ENCODE measurements at regions of chr3 and their contacts with region 1.

Region 1: DNA sequence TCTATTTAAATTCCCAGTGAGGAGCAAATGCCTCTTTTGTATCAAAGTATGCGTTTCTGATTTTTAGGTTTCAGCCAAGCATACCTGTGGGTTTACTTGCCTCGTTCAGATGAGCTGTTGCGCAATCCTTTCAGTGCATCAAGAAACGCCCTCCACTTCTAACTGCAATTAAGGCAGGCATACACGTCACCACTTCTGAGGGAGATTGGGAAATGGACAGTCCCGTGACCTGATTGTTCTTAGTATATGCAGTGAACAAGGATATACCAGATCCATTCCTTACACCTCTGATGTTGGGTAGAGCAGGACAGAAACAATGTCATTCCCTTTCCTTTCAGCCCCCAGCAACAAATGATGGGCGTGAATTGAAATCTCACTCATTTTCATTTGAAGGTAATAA is 219.0 kb downstream of the ITPR1 start:
- DNase-seq: peak in 2 of 14 experiments; percentile 34 to 42
- ATAC-seq: no peak
- H3K4me3 ChIP-seq: no peak overlapping the region
- H3K4me3 Mint-ChIP-seq: no peak overlapping the region
- H3K27ac ChIP-seq: no peak overlapping the region
- H3K27ac Mint-ChIP-seq: no peak overlapping the region
- H3K4me1 ChIP-seq: no peaks in the 10 kb centered on the region
- H3K4me1 Mint-ChIP-seq: no peaks in the 10 kb centered on the region
- H3K27me3 ChIP-seq: no peaks in the 10 kb centered on the region
- H3K27me3 Mint-ChIP-seq: no peaks in the 10 kb centered on the region
- CTCF ChIP-seq: no peak

Region 2: DNA sequence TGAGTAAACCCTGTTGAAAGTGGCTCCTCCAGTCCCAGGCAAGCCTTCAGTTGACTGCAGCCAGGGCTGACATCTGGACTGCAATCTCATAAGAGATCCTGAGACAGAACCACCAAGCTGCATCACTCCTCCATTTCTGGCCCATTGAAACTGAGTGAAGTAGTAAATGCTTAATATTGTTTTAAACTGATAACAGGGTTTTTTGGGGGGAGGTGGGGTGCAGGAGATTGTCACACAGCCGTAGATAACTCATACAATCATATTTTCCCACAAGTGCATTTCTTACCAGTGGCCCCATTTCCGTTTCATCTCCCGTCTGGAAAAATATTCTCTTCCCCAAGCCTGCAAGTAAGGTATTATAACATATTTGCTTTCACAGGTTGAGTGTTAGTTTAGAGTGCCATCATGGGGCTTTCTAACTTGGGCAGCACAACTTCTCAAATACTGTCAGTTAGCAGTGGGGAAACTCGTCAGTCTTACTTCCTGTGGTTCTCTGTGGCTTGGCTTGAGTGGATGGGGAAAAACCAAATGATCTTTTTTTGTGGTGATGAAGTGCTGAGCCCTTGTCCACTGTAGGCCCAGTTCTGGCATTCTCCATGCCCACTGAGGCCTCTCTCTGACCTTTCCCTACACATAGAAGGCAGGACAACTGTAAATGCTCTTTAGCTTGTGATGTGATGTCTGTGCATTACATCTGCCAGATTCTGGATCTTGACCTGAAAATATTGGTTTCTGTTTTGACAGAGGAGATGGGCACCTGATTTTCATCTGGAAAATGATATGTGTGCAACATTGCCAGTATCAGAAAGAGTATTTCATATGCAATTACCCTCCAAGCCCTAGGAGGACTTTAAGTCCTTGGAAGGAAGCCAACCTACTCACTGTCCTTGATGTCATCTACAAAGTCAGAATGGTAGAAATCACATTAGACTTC is 177.0 kb after region 1 on chr3:
- CTCF ChIA-PET with region 1: no interaction called
- POLR2A ChIA-PET with region 1: no interaction called
- intact Hi-C with region 1: loop called in 1 of 2 experiments (anchors 5 kb)
- DNase-seq: peak in 5 of 14 experiments; percentile 13 to 73 (median 68)
- ATAC-seq: peak; percentile 66
- H3K4me3 ChIP-seq: no peak overlapping the region
- H3K4me3 Mint-ChIP-seq: no peak overlapping the region
- H3K27ac ChIP-seq: no peak overlapping the region
- H3K27ac Mint-ChIP-seq: peak overlapping the region; percentile 39
- H3K4me1 ChIP-seq: peaks cover 19% of the 10 kb centered on the region
- H3K4me1 Mint-ChIP-seq: peaks cover 16% of the 10 kb centered on the region
- H3K27me3 ChIP-seq: no peaks in the 10 kb centered on the region
- H3K27me3 Mint-ChIP-seq: no peaks in the 10 kb centered on the region
- CTCF ChIP-seq: no peak

Region 3: GRCh38 chr3:4943553-4943952 is 231.4 kb after region 1 on chr3:
- CTCF ChIA-PET with region 1: no interaction called
- POLR2A ChIA-PET with region 1: no interaction called
- intact Hi-C with region 1: no loop called
- DNase-seq: peak in 2 of 14 experiments; percentile 11 to 24
- ATAC-seq: no peak
- H3K4me3 ChIP-seq: no peak overlapping the region
- H3K4me3 Mint-ChIP-seq: no peak overlapping the region
- H3K27ac ChIP-seq: no peak overlapping the region
- H3K27ac Mint-ChIP-seq: no peak overlapping the region
- H3K4me1 ChIP-seq: no peaks in the 10 kb centered on the region
- H3K4me1 Mint-ChIP-seq: no peaks in the 10 kb centered on the region
- H3K27me3 ChIP-seq: no peaks in the 10 kb centered on the region
- H3K27me3 Mint-ChIP-seq: no peaks in the 10 kb centered on the region
- CTCF ChIP-seq: peak; percentile 29

Region 4: DNA sequence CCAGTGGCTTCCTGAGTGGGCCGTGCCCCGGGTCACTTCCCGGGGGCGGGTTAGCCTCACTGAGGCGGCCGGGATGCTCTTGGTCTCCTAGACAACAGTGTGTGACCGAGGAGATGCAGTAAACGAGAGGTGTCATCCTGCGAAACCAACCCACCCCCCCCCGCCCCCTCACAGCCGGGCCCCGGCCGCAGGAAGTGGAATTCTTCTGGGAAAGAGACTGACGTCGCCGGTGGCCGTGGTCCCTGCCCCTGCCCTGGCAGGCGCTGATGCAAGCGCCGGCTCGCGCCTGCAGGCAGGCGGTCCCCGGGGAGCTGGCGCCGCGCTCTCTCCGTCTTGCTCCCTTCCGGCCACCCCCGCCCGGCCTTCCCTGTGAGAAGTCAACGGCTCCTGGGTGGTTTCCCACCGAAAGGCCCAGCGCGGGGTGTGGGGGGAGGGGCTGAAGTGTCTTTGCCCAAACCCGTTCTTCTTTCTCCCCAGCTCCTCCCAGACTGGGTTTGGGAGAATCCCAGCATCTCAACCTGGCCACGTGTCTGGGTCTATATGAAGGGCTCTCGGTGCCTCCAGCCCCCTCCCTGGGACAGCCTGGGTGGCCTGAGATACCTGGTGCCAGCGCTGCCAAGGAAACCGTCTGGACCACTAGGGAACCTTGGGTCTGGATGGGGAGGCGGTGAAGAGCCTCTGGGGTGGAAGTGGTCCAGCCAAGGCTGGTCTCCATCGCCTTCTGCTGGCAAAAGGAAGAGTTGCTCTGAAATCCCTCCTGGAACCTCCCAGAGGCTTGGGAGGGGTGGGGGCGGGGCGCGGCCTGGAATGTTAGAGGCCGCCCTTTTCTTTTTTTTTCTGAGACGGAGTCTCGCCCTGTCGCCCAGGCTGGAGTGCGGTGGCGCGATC is 314.4 kb after region 1 on chr3:
- CTCF ChIA-PET with region 1: interaction called, 15 read pairs
- POLR2A ChIA-PET with region 1: interaction called, 3 read pairs
- intact Hi-C with region 1: loop called (anchors 1 kb)
- DNase-seq: peak; percentile 33 to 87 (median 48)
- ATAC-seq: peak; percentile 75
- H3K4me3 ChIP-seq: peak overlapping the region; percentile 61
- H3K4me3 Mint-ChIP-seq: peak overlapping the region; percentile 86
- H3K27ac ChIP-seq: peak overlapping the region in 1 of 2 donors; percentile 44
- H3K27ac Mint-ChIP-seq: peak overlapping the region; percentile 75
- H3K4me1 ChIP-seq: peaks cover 16% of the 10 kb centered on the region
- H3K4me1 Mint-ChIP-seq: peaks cover 11% of the 10 kb centered on the region
- H3K27me3 ChIP-seq: no peaks in the 10 kb centered on the region
- H3K27me3 Mint-ChIP-seq: no peaks in the 10 kb centered on the region
- CTCF ChIP-seq: peak; percentile 68

Region 5: GRCh38 chr3:5057857-5058324 is 345.7 kb after region 1 on chr3:
- CTCF ChIA-PET with region 1: interaction called, 31 read pairs
- POLR2A ChIA-PET with region 1: interaction called, 14 read pairs
- intact Hi-C with region 1: loop called (anchors 1 kb)
- DNase-seq: peak; percentile 53 to 87 (median 63)
- ATAC-seq: peak; percentile 96
- H3K4me3 ChIP-seq: no peak overlapping the region
- H3K4me3 Mint-ChIP-seq: no peak overlapping the region
- H3K27ac ChIP-seq: no peak overlapping the region
- H3K27ac Mint-ChIP-seq: no peak overlapping the region
- H3K4me1 ChIP-seq: peaks cover 2% of the 10 kb centered on the region
- H3K4me1 Mint-ChIP-seq: no peaks in the 10 kb centered on the region
- H3K27me3 ChIP-seq: no peaks in the 10 kb centered on the region
- H3K27me3 Mint-ChIP-seq: peaks cover 3% of the 10 kb centered on the region
- CTCF ChIP-seq: peak; percentile 79

Measured in CD4-positive, alpha-beta T cell (primary cell).